ENCODE measurements at regions of chr13 and their contacts with region 1.

Region 1: DNA sequence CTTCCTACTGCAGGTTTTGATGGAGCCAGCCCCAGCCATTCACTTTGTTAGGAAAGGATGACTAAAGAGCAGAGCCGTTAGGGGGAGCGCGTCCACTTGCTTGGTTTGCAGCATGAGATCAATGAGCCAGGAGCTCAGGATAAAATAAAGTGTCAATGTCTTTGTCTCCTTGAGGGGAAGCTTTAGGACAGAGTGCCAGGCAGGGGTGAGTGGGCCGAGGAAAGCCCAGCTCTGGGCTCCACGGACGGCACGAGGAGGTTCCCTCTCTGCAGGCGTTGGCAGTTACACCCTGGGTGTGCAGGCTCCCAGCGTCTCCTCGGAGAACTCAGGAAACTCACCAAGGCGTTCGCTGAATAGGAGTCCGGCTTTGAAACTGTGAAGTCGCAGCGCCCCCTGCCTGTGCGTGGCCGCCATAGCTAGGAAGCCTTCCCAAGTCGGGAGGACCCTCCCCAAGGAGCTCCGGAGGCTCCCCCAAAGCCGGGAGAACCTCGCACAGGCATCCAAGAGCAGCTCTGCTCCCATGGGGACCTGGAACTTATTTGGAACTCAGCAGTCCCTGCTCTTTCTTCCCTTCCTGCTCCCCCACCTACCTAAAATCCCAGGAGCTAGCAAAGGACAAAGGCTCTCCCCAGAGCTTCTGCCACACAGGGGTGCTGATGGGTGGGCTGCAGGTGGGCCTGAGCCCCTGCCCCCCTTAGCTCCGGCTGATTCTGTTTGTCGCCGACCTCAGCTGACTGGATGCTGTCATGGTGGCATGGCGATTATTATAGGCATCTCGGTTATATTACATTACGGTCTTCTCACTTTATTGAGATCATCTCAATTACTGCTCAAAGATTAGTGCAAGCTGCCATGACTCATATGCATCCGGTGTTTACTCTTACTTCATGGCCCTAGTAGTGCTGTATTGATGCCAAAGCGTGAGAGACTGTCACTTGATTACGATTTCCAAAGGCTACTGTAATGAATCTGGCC is 34.4 kb downstream of the GSX1 start:
- DNase-seq: peak; percentile 77
- ATAC-seq: peak; percentile 65
- H3K4me3 Mint-ChIP-seq: no peak overlapping the region
- H3K27ac Mint-ChIP-seq: no peak overlapping the region
- H3K4me1 Mint-ChIP-seq: peaks cover 8% of the 10 kb centered on the region
- H3K27me3 Mint-ChIP-seq: peaks cover 69% of the 10 kb centered on the region
- CTCF ChIP-seq: peak; percentile 97

Region 2: GRCh38 chr13:27374650-27375049 is 452.0 kb before region 1 on chr13:
- CTCF ChIA-PET with region 1: interaction called, 140 read pairs
- POLR2A ChIA-PET with region 1: interaction called, 3 read pairs
- intact Hi-C with region 1: loop called (anchors 2 kb)
- DNase-seq: peak; percentile 70
- ATAC-seq: peak; percentile 93
- H3K4me3 Mint-ChIP-seq: no peak overlapping the region
- H3K27ac Mint-ChIP-seq: no peak overlapping the region
- H3K4me1 Mint-ChIP-seq: peaks cover 8% of the 10 kb centered on the region
- H3K27me3 Mint-ChIP-seq: peaks cover 15% of the 10 kb centered on the region
- CTCF ChIP-seq: peak; percentile 52

Region 3: DNA sequence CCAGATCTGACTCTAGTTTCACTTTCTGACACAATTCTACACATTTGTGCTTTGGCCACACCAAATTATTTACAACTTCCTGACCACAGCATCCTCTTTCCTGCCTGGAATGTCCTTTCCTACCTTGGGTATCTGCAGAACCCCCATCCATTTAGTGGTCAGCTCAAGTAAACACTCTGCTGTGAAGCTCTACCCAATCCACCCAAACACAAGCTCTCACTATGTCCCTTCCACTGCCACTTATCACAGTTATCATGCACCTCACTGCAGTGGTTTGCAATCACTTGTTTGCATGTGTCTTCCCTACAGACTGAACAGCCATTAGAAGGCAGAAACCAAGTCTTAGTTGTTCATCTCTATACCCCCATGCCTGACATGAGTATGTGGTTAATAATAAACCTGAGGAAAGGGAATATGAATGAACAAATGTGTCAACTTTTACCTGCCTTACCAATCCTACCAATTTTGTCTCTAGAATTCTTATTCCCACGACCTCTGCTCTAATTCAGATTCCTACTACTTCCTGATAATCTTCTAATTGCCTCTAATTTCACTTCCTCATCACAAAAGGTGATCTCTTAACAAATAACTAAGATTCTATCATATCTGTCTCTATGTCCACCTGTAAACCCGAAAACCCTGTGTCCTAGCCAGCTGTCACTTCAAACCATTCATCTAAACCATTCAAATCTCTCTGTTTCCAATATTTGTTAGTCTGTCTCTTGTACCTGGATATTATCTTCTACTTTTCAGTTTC is 231.4 kb before region 1 on chr13:
- CTCF ChIA-PET with region 1: no interaction called
- POLR2A ChIA-PET with region 1: no interaction called
- intact Hi-C with region 1: no loop called
- DNase-seq: no peak
- ATAC-seq: no peak
- H3K4me3 Mint-ChIP-seq: no peak overlapping the region
- H3K27ac Mint-ChIP-seq: no peak overlapping the region
- H3K4me1 Mint-ChIP-seq: peaks cover 4% of the 10 kb centered on the region
- H3K27me3 Mint-ChIP-seq: no peaks in the 10 kb centered on the region
- CTCF ChIP-seq: no peak

Region 4: GRCh38 chr13:27770809-27771208 is 55.9 kb before region 1 on chr13:
- CTCF ChIA-PET with region 1: interaction called, 128 read pairs
- POLR2A ChIA-PET with region 1: interaction called, 7 read pairs
- intact Hi-C with region 1: loop called (anchors 5 kb)
- DNase-seq: peak; percentile 59
- ATAC-seq: no peak
- H3K4me3 Mint-ChIP-seq: no peak overlapping the region
- H3K27ac Mint-ChIP-seq: no peak overlapping the region
- H3K4me1 Mint-ChIP-seq: no peaks in the 10 kb centered on the region
- H3K27me3 Mint-ChIP-seq: peaks cover 16% of the 10 kb centered on the region
- CTCF ChIP-seq: peak; percentile 44

Region 5: DNA sequence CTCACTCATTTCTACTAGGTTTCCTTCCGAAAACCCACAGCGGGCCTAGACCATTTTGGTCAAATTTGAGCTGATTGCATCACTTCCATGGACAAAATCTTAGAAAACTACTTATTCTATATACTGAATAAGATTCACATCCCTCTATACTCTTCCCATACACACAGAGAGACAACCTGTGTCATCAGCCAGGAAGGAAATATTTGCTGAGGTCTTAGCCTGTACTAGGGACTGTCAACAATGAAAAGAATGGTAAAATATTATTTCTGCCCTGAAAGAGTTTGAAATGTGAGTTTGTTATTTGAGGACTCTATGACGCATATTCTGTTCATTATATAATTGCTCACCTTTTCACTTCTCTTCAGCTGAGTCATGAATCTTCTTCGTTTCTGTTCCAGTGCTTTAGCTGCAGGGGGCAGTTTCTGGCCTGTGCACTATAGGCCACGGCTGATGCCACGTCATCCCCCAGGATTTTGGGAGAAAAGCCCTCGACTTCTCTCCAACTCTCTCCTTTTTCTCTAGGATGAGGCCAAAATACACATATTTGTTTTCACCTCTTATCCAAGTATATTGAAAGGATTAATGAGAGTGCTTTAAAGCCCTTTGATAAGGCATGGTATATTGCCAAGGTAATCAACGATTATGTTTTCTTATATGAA is 13.3 kb after region 1 on chr13:
- CTCF ChIA-PET with region 1: interaction called, 33 read pairs
- POLR2A ChIA-PET with region 1: no interaction called
- intact Hi-C with region 1: no loop called
- DNase-seq: no peak
- ATAC-seq: no peak
- H3K4me3 Mint-ChIP-seq: no peak overlapping the region
- H3K27ac Mint-ChIP-seq: no peak overlapping the region
- H3K4me1 Mint-ChIP-seq: no peaks in the 10 kb centered on the region
- H3K27me3 Mint-ChIP-seq: peaks cover 28% of the 10 kb centered on the region
- CTCF ChIP-seq: no peak

Region 6: GRCh38 chr13:27960362-27961226 is 133.9 kb after region 1 on chr13:
- CTCF ChIA-PET with region 1: interaction called, 200 read pairs
- POLR2A ChIA-PET with region 1: no interaction called
- intact Hi-C with region 1: no loop called
- DNase-seq: peak; percentile 62
- ATAC-seq: peak; percentile 69
- H3K4me3 Mint-ChIP-seq: peak overlapping the region; percentile 26
- H3K27ac Mint-ChIP-seq: no peak overlapping the region
- H3K4me1 Mint-ChIP-seq: peaks cover 3% of the 10 kb centered on the region
- H3K27me3 Mint-ChIP-seq: peaks cover 67% of the 10 kb centered on the region
- CTCF ChIP-seq: peak; percentile 54

Region 7: DNA sequence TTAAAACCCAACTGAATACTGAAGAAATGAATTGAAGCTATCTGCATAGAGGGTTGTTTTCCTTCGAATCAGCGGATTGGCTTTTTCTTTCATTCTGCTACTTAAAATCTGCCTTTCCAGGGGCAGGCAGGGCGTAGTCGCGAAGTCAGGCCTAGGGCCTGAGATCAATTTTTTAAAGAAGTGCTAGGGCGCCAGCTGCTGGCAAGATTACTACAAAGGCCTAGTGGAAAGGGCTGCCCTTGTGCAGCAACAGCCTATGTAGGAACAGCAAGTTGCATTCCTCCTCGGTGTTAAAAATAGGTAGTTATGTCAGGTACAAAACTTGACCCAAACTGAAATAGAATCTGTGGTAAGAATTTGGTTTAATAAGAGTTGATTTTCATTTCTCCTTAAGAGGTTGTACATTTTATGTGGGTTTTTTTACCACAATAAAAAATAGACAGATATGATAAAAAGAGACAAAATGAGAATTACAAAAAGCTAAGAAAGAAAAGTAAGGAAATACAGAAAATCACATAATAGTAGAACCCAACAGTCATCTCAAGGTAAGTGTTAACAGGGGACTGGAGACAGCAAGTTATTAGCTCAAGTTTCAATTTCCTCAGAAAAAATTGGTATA is 171.3 kb after region 1 on chr13:
- CTCF ChIA-PET with region 1: interaction called, 13 read pairs
- POLR2A ChIA-PET with region 1: no interaction called
- intact Hi-C with region 1: no loop called
- DNase-seq: peak; percentile 60
- ATAC-seq: peak; percentile 67
- H3K4me3 Mint-ChIP-seq: no peak overlapping the region
- H3K27ac Mint-ChIP-seq: no peak overlapping the region
- H3K4me1 Mint-ChIP-seq: no peaks in the 10 kb centered on the region
- H3K27me3 Mint-ChIP-seq: no peaks in the 10 kb centered on the region
- CTCF ChIP-seq: peak; percentile 46

Measured in activated CD8-positive, alpha-beta T cell treated with anti-CD3 and anti-CD28 coated beads for 36 hours (primary cell).